H1 (cell line): ENCODE measurements at regions of chr17 and their contacts with region 1.

Region 1: GRCh38 chr17:55348749-55349354 is 72.8 kb downstream of the MMD start:
- DNase-seq: peak in 1 of 2 experiments; percentile 57
- H3K4me3 ChIP-seq: no peak overlapping the region
- H3K27ac ChIP-seq: no peak overlapping the region
- H3K4me1 ChIP-seq: peaks cover 0 to 5% (median 3%) of the 10 kb centered on the region in 4 experiments; a peak in 5 of 7 replicates
- H3K27me3 ChIP-seq: no peaks in the 10 kb centered on the region
- CTCF ChIP-seq: peak; percentile 58 to 76 (median 67)
- EP300 ChIP-seq: no peak
- POLR2A ChIP-seq: no peak
- RAD21 ChIP-seq: peak; percentile 72 to 77

Region 2: DNA sequence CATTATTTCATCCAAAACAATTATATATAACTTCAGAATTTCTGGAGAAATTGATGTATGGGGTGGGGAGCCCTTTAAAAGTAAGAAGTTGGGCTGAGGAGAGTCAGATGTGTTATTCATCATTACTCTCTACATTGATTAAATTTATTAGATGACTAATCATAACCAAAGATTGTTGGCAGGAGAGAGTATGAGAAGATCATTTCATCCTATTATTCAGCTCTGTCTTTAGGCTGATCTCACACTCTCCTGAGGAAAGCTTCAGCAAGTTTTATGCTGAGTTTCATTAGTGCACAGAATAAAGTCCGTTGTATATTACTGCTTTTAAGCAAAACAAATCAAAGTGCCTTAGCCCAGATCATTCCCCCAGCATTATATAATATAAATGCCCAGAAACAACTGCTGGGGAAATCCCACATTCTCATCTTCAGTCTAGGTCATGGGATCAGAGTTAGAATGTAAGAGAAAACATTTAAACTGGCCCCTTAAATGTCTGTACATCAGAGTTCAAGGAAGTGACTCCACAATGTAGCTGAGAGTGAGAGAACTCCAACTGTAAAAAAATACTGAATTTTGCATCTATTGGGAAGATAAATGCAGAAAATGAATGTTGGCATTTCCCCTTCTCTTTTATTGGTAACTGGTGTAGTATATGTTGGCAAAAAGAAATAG is 214.2 kb before region 1 on chr17:
- CTCF ChIA-PET with region 1: no interaction called
- POLR2A ChIA-PET with region 1: no interaction called
- DNase-seq: no peak
- H3K4me3 ChIP-seq: no peak overlapping the region
- H3K27ac ChIP-seq: no peak overlapping the region
- H3K4me1 ChIP-seq: no peaks in the 10 kb centered on the region
- H3K27me3 ChIP-seq: no peaks in the 10 kb centered on the region
- CTCF ChIP-seq: no peak
- EP300 ChIP-seq: no peak
- POLR2A ChIP-seq: no peak
- RAD21 ChIP-seq: no peak

Region 3: DNA sequence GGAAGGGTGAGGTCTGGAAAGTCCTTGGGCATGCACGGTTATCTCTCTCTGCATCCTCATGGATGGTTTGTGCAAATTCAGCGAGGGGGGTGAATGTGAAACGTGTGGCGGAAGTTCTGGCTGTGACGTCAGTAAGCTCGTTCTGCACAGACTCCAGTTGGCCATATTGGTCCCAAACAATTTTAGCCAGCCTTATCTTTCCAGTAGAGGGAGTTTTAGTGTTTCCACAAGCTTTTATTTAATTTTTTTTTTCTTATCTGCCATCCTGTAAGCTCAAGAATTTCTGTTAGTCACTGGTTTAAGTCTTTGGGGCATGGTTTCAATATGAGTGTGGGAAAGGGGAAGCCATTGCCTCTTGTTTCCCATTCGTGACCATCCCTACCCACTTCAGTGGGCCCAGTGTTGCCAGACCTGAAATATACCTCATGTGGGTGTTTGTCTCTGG is 45.1 kb before region 1 on chr17:
- CTCF ChIA-PET with region 1: interaction called, 20 read pairs
- POLR2A ChIA-PET with region 1: no interaction called
- DNase-seq: no peak
- H3K4me3 ChIP-seq: no peak overlapping the region
- H3K27ac ChIP-seq: no peak overlapping the region
- H3K4me1 ChIP-seq: peaks cover 0 to 4% (median 2%) of the 10 kb centered on the region in 4 experiments; a peak in 2 of 7 replicates
- H3K27me3 ChIP-seq: no peaks in the 10 kb centered on the region
- CTCF ChIP-seq: no peak
- EP300 ChIP-seq: no peak
- POLR2A ChIP-seq: no peak
- RAD21 ChIP-seq: no peak

Region 4: GRCh38 chr17:55327225-55328088 is 21.4 kb before region 1 on chr17:
- CTCF ChIA-PET with region 1: interaction called, 11 read pairs
- POLR2A ChIA-PET with region 1: no interaction called
- DNase-seq: no peak
- H3K4me3 ChIP-seq: no peak overlapping the region
- H3K27ac ChIP-seq: no peak overlapping the region
- H3K4me1 ChIP-seq: no peaks in the 10 kb centered on the region
- H3K27me3 ChIP-seq: no peaks in the 10 kb centered on the region
- CTCF ChIP-seq: no peak
- EP300 ChIP-seq: no peak
- POLR2A ChIP-seq: no peak
- RAD21 ChIP-seq: no peak

Region 5: DNA sequence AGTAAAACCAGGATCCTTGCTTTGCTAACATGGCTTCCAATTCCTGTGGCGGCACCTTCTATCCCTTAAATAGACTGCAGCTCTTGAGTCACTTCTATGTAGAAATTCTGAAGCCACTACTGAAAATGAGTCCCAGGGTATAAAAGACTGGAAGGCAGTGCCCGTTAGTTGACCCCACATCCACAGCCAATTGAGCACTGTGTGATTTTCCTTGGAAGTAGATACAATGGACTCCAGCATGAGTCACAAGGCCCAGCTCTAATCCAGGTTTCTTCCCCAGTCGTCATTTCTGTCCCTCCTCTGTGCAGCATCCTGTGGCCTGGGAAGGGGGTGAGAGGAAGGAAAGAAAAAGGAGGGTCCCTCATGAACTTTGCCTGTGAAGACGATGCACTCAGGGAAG is 14.6 kb before region 1 on chr17:
- CTCF ChIA-PET with region 1: interaction called, 18 read pairs
- POLR2A ChIA-PET with region 1: no interaction called
- DNase-seq: no peak
- H3K4me3 ChIP-seq: no peak overlapping the region
- H3K27ac ChIP-seq: no peak overlapping the region
- H3K4me1 ChIP-seq: peaks cover 0 to 5% (median 1%) of the 10 kb centered on the region in 4 experiments; a peak in 3 of 7 replicates
- H3K27me3 ChIP-seq: no peaks in the 10 kb centered on the region
- CTCF ChIP-seq: no peak
- EP300 ChIP-seq: no peak
- POLR2A ChIP-seq: no peak
- RAD21 ChIP-seq: no peak

Region 6: GRCh38 chr17:55366020-55366481 is 17.2 kb after region 1 on chr17:
- CTCF ChIA-PET with region 1: interaction called, 31 read pairs
- POLR2A ChIA-PET with region 1: interaction called, 4 read pairs
- DNase-seq: no peak
- H3K4me3 ChIP-seq: no peak overlapping the region
- H3K27ac ChIP-seq: no peak overlapping the region
- H3K4me1 ChIP-seq: peaks cover 0 to 2% (median 0%) of the 10 kb centered on the region in 4 experiments; a peak in 1 of 7 replicates
- H3K27me3 ChIP-seq: no peaks in the 10 kb centered on the region; a peak in 1 of 7 replicates
- CTCF ChIP-seq: no peak
- EP300 ChIP-seq: no peak
- POLR2A ChIP-seq: no peak
- RAD21 ChIP-seq: no peak